ENCODE measurements at regions of chr15 and their contacts with region 1.

Region 1: DNA sequence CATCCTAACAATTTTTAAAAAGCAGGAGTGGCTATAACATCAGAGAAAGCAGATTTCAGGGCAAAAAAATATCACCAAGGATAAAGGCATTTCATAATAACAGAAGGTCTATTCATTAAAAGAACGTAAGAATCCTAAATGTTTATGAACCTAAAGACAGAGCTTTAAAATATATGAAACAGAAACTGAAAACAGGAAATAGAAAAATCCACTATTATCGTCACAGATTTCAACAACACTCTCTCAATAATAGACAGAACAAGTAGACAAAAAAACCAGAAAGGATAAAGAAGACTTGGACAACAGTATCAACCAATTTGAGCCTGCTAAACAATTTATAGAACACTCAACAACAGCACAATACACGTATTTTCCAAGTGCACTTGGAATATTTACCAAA is 71.4 kb downstream of the FBXL22 start:
- DNase-seq: no peak
- H3K4me3 ChIP-seq: no peak overlapping the region
- H3K27ac ChIP-seq: no peak overlapping the region
- H3K4me1 ChIP-seq: no peaks in the 10 kb centered on the region
- H3K27me3 ChIP-seq: no peaks in the 10 kb centered on the region
- CTCF ChIP-seq: no peak
- POLR2A ChIP-seq: no peak

Region 2: DNA sequence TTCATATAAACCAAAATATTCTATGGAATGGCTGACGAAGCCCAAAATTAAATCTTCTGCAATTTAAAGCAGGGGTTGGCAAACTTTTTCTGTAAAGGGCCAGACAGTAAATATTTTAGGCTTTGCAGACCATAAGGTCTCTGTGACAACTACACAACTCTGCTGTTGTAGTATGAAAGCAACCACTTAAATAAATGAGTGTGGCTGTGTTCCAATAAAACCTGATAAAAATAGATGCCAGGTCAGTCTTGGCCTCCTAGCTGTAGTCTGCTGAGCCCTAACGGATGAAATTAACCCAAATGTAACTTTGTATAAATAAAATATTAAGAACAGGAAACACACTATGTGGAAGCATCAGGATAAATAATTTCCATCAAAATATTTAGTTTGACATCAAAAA is 32.8 kb after region 1 on chr15:
- CTCF ChIA-PET with region 1: no interaction called
- POLR2A ChIA-PET with region 1: no interaction called
- dilution Hi-C with region 1: no loop called
- intact Hi-C with region 1: loop called (anchors 5 kb)
- DNase-seq: no peak
- H3K4me3 ChIP-seq: no peak overlapping the region
- H3K27ac ChIP-seq: no peak overlapping the region
- H3K4me1 ChIP-seq: no peaks in the 10 kb centered on the region
- H3K27me3 ChIP-seq: no peaks in the 10 kb centered on the region
- CTCF ChIP-seq: no peak
- POLR2A ChIP-seq: no peak

Region 3: GRCh38 chr15:63915873-63916771 is 247.5 kb after region 1 on chr15:
- CTCF ChIA-PET with region 1: no interaction called
- POLR2A ChIA-PET with region 1: no interaction called
- dilution Hi-C with region 1: no loop called
- intact Hi-C with region 1: no loop called
- DNase-seq: peak; percentile 78
- H3K4me3 ChIP-seq: no peak overlapping the region
- H3K27ac ChIP-seq: no peak overlapping the region
- H3K4me1 ChIP-seq: peaks cover 7% of the 10 kb centered on the region
- H3K27me3 ChIP-seq: no peaks in the 10 kb centered on the region
- CTCF ChIP-seq: peak; percentile 37 to 67
- POLR2A ChIP-seq: no peak

Region 4: DNA sequence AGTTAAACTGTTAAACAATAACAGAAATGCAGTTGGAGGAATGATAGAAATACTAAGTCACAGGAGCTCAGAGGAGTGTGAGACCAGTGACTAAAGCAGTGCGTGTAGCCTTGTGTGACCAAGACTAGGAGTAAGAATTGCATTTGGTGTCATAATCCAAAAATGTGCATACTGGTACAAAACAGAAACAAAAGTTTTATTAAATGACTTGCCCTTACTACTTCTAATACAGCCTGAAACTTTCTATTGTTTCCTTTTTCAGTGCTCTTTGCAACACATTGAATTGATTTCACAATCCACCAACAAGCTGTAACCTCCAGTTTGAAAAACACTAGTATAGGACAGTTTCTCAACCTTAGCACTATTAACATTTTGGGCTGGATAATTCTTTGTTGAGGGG is 444.3 kb after region 1 on chr15:
- CTCF ChIA-PET with region 1: no interaction called
- POLR2A ChIA-PET with region 1: no interaction called
- dilution Hi-C with region 1: no loop called
- intact Hi-C with region 1: no loop called
- DNase-seq: no peak
- H3K4me3 ChIP-seq: no peak overlapping the region
- H3K27ac ChIP-seq: no peak overlapping the region
- H3K4me1 ChIP-seq: peaks cover 15% of the 10 kb centered on the region
- H3K27me3 ChIP-seq: no peaks in the 10 kb centered on the region
- CTCF ChIP-seq: no peak
- POLR2A ChIP-seq: no peak

Measured in endothelial cell of umbilical vein (primary cell).